GM12878 (cell line): ENCODE measurements at regions of chr7 and their contacts with region 1.

Region 1: GRCh38 chr7:150356265-150356897 is 12.2 kb upstream of the REPIN1 start:
- DNase-seq: no peak
- ATAC-seq: peak; percentile 53
- H3K4me3 ChIP-seq: no peak overlapping the region
- H3K27ac ChIP-seq: no peak overlapping the region
- H3K4me1 ChIP-seq: peaks cover 20% of the 10 kb centered on the region
- H3K27me3 ChIP-seq: no peaks in the 10 kb centered on the region
- CTCF ChIP-seq: peak; percentile 62 to 73 (median 64)
- EP300 ChIP-seq: no peak
- POLR2A ChIP-seq: no peak
- RAD21 ChIP-seq: peak; percentile 73

Region 2: DNA sequence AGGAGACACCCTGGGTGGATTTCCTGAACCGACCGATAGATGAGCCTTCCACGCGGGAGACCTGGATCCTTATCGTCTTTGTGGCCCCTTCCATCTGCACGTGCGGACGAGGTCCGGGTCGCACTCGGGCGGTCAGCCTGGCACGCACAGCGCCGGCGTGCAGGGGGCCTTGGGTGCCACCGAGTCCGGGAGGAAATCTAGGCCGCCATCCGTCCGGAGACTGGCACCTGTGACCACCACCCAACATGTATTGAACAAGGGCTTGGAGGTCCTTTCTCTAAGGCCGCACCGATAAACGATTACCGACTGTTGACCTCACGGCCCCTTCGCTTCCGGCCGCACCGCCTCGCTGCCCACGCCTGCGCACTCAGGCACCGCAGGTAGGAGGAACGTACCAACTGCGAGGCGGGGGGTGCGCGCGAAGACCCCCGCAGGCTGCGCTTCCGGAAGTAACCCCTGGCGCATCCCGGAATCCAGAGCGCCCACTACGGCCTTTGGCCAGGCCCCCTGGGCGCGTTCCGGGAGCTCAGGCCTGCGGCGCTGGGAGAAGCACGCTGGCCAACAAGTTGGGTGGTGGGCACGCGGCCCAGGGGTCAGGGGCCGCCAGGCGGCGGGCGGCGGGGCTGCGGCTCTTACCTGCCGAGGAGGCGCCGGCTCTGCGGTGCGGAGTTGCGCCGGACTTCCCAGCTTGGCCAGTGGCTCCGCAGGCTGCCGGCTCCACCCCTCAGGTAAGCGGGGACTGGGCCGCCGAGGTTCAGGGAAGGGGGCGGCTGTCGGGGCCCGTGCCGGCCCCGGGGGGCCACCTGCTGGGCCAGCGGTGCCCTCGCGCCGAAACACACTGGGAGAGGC is 33.3 kb before region 1 on chr7 and contains the starts of genes ACTR3C and LRRC61:
- CTCF ChIA-PET with region 1: interaction called, 16 read pairs
- POLR2A ChIA-PET with region 1: interaction called, 3 read pairs
- RAD21 ChIA-PET with region 1: interaction called, 4 read pairs
- SMC1A ChIA-PET with region 1: interaction called, 4 read pairs
- in situ Hi-C with region 1: no loop called
- intact Hi-C with region 1: loop called (anchors 5 kb)
- DNase-seq: no peak
- ATAC-seq: peak; percentile 82
- H3K4me3 ChIP-seq: peak within 1 kb of the TSS; percentile 78
- H3K27ac ChIP-seq: peak within 1 kb of the TSS; percentile 99
- H3K4me1 ChIP-seq: peaks cover 13% of the 10 kb centered on the region; the same call in 1 of the 2 replicates
- H3K27me3 ChIP-seq: no peaks in the 10 kb centered on the region
- CTCF ChIP-seq: peak; percentile 19 to 43 (median 26); a peak in 3 of 6 replicates
- EP300 ChIP-seq: no peak
- POLR2A ChIP-seq: peak; percentile 92
- RAD21 ChIP-seq: peak; percentile 15; the same call in 1 of the 2 replicates
- polyA plus RNA-seq, gene ACTR3C: 2.0 to 2.7 TPM
- polyA plus RNA-seq, gene LRRC61: 1.4 to 2.5 TPM

Region 3: DNA sequence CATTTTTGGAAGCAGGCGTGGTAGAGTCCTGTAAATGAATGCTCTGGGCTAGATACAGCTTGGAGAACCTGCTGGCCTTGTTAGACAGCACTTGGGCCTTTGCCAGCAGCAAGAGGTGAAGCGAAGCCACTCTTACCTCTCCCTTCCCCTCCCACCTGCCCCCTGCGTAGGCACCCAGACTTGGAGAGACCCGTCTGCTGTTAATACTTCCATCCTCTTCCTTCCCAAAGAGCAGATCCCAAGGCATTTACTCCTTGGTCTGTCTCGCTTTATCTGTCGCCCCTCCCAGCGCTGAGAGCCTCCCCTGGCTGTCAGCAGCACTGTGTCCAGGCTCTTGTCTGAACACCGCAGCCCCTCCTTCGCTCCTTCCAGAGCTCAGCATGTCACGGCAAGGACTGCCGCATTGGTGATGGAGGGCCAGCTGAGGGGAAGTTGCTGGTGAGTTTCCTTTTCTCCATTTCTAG is 17.0 kb after region 1 on chr7:
- CTCF ChIA-PET with region 1: interaction called, 17 read pairs
- POLR2A ChIA-PET with region 1: interaction called, 8 read pairs
- RAD21 ChIA-PET with region 1: interaction called, 8 read pairs
- SMC1A ChIA-PET with region 1: interaction called, 19 read pairs
- in situ Hi-C with region 1: no loop called
- intact Hi-C with region 1: no loop called
- DNase-seq: no peak
- ATAC-seq: peak; percentile 3; the same call in 2 of the 3 replicates
- H3K4me3 ChIP-seq: peak overlapping the region; percentile 58; the same call in 1 of the 2 replicates
- H3K27ac ChIP-seq: peak overlapping the region; percentile 70
- H3K4me1 ChIP-seq: peaks cover 48% of the 10 kb centered on the region
- H3K27me3 ChIP-seq: no peaks in the 10 kb centered on the region
- CTCF ChIP-seq: no peak
- EP300 ChIP-seq: no peak
- POLR2A ChIP-seq: no peak
- RAD21 ChIP-seq: no peak

Region 4: DNA sequence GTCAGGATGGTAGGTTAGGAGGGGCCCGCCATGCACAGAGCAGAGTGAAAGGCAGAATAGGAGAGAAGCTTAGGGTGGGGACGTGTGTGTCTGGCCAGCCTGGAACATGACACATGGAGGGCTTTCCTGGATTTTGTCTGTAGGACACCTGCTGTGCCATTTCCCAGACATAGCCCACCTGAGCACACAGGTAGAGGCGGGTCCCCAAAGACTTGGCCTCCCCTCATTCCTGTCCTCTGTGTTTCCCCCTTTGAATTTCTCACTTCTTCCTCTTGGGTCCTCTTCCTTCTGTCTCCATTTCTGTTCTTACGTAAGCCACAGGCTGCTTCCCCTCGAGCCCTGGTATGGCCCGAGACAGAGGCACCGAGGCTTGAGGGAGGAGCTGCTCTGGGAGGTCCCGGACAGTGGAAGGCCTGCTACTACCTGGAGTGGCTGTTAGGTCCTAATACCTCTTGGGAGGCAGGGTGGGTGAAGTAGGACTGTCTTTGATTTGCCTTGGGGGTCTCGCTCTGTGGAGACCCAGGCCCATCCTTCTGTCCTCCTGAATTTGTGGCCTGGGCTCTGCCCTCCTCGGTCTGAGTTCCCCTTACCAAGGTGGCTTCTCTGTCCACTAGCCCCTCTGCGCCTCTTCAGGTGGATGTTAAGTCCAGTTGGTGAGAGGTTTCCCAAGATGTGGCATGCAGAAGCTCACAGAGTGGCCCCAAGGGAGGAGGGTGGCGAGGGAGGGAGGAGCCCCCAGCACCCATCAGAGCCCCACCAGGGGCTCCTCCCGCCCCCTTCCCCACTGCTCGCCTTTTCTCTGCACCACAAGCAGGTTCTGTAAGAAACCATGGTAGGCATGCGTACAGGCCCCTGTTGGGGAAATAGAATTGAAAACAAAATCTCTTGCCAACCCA is 28.3 kb after region 1 on chr7:
- CTCF ChIA-PET with region 1: interaction called, 12 read pairs
- POLR2A ChIA-PET with region 1: interaction called, 4 read pairs
- RAD21 ChIA-PET with region 1: interaction called, 4 read pairs
- SMC1A ChIA-PET with region 1: interaction called, 5 read pairs
- in situ Hi-C with region 1: no loop called
- intact Hi-C with region 1: no loop called
- DNase-seq: no peak
- ATAC-seq: no peak
- H3K4me3 ChIP-seq: no peak overlapping the region
- H3K27ac ChIP-seq: no peak overlapping the region; the same call in 1 of the 2 replicates
- H3K4me1 ChIP-seq: peaks cover 47% of the 10 kb centered on the region
- H3K27me3 ChIP-seq: no peaks in the 10 kb centered on the region
- CTCF ChIP-seq: no peak
- EP300 ChIP-seq: no peak
- POLR2A ChIP-seq: no peak
- RAD21 ChIP-seq: no peak

Region 5: GRCh38 chr7:150420987-150421674 is 64.8 kb after region 1 on chr7:
- CTCF ChIA-PET with region 1: interaction called, 49 read pairs
- POLR2A ChIA-PET with region 1: interaction called, 4 read pairs
- RAD21 ChIA-PET with region 1: interaction called, 26 read pairs
- SMC1A ChIA-PET with region 1: interaction called, 41 read pairs
- in situ Hi-C with region 1: no loop called
- intact Hi-C with region 1: loop called (anchors 1 kb)
- DNase-seq: no peak
- ATAC-seq: peak; percentile 100
- H3K4me3 ChIP-seq: no peak overlapping the region
- H3K27ac ChIP-seq: no peak overlapping the region
- H3K4me1 ChIP-seq: peaks cover 2% of the 10 kb centered on the region; the same call in 1 of the 2 replicates
- H3K27me3 ChIP-seq: no peaks in the 10 kb centered on the region
- CTCF ChIP-seq: peak; percentile 86 to 95 (median 88); a peak in 5 of 6 replicates
- EP300 ChIP-seq: no peak
- POLR2A ChIP-seq: no peak
- RAD21 ChIP-seq: peak; percentile 94

Region 6: GRCh38 chr7:150753826-150754603 is 397.6 kb after region 1 on chr7:
- CTCF ChIA-PET with region 1: interaction called, 3 read pairs
- POLR2A ChIA-PET with region 1: no interaction called
- RAD21 ChIA-PET with region 1: no interaction called
- SMC1A ChIA-PET with region 1: interaction called, 12 read pairs
- in situ Hi-C with region 1: no loop called
- intact Hi-C with region 1: no loop called
- DNase-seq: no peak
- ATAC-seq: peak; percentile 83
- H3K4me3 ChIP-seq: no peak overlapping the region
- H3K27ac ChIP-seq: peak overlapping the region; percentile 32
- H3K4me1 ChIP-seq: peaks cover 29% of the 10 kb centered on the region
- H3K27me3 ChIP-seq: no peaks in the 10 kb centered on the region
- CTCF ChIP-seq: peak; percentile 45 to 56 (median 52); a peak in 5 of 6 replicates
- EP300 ChIP-seq: no peak
- POLR2A ChIP-seq: no peak
- RAD21 ChIP-seq: peak; percentile 71

Region 7: GRCh38 chr7:150962553-150963399 is 606.4 kb after region 1 on chr7:
- CTCF ChIA-PET with region 1: no interaction called
- POLR2A ChIA-PET with region 1: no interaction called
- RAD21 ChIA-PET with region 1: no interaction called
- SMC1A ChIA-PET with region 1: no interaction called
- in situ Hi-C with region 1: no loop called
- intact Hi-C with region 1: no loop called
- DNase-seq: no peak
- ATAC-seq: peak; percentile 97
- H3K4me3 ChIP-seq: no peak overlapping the region
- H3K27ac ChIP-seq: no peak overlapping the region
- H3K4me1 ChIP-seq: no peaks in the 10 kb centered on the region
- H3K27me3 ChIP-seq: no peaks in the 10 kb centered on the region; a peak in 2 of 4 replicates
- CTCF ChIP-seq: peak; percentile 91 to 95 (median 93)
- EP300 ChIP-seq: no peak
- POLR2A ChIP-seq: no peak
- RAD21 ChIP-seq: peak; percentile 88